ENCODE measurements at regions of chr3 and their contacts with region 1.

Region 1: DNA sequence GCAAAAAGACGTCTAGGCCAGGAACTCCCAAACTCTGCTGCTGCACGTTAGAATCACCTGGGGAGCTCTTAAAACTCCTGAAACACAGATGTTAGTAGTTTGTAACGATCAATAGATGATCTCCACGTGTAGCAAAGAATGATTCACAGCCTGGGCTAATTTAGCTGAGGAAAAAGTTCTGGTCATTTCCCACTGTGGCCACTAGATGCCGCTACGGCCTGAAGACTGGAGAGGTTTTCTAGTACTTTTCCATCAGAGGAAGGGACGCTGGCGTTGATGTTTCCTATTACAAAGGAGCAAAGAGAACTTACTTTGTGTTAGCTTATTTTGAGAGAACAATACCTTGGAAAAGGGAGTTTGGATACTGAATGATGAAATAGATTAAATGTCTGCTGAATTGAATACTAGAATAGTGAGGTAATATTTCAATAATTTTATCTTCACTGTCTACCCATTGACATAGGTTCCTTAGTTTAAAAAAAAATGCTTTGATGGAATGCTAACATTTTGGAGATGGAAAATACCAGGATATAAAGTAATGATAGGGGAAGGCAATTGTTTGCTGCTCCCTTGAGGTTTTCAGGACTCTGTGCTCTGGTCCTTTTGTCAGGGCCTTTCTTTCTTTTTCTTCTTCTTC is 159.1 kb downstream of the P3H2 start:
- DNase-seq: peak; percentile 70 to 74
- ATAC-seq: peak; percentile 59 to 82; a peak in 4 of 6 replicates
- H3K4me3 ChIP-seq: no peak overlapping the region
- H3K27ac ChIP-seq: peak overlapping the region; percentile 59 to 63
- H3K4me1 ChIP-seq: peaks cover 14% of the 10 kb centered on the region
- CTCF ChIP-seq: peak; percentile 78
- EP300 ChIP-seq: no peak
- POLR2A ChIP-seq: no peak
- RAD21 ChIP-seq: peak; percentile 87 to 90

Region 2: DNA sequence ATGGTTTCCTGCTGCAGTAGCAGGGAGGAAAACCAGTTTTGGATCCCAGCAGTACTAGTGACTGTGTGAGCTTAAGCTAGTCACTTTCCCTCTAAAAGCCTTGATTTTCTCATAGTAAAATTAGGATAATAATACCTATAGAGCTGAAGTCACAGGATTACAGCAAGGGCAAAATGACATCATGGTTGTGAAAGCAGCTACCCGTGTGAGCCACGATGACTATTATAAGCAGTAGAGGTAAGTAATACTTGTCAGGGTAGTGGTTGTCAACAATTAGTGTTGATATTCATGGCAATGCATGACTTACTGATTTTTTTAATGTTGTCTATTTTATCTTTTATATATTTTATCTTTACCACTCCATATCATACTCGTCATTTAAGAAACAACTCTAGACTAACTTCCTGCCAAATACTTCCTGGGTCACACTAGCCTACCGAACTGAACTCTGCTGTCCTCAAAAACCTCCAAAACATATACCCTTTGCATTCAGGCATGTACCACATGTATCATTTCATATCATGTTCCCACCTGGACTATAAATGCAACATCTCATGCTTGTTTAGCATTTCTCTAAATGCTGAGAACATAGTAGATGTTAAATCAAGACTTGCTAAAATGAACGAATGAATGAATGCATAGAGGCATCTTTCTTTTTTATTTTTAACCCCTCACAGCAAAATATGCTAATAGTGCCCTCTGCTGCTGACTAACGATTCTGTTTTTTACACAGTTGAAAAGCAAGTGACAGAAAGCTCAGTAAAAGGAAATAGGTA is 13.5 kb before region 1 on chr3:
- CTCF ChIA-PET with region 1: interaction called, 10 read pairs
- POLR2A ChIA-PET with region 1: no interaction called
- DNase-seq: peak in 1 of 2 experiments; percentile 60
- ATAC-seq: peak in 1 of 2 experiments; percentile 56; a peak in 2 of 6 replicates
- H3K4me3 ChIP-seq: no peak overlapping the region
- H3K27ac ChIP-seq: peak overlapping the region; percentile 68 to 72
- H3K4me1 ChIP-seq: peaks cover 12% of the 10 kb centered on the region
- CTCF ChIP-seq: peak; percentile 76
- EP300 ChIP-seq: no peak
- POLR2A ChIP-seq: no peak
- RAD21 ChIP-seq: peak; percentile 90 to 91

Region 3: DNA sequence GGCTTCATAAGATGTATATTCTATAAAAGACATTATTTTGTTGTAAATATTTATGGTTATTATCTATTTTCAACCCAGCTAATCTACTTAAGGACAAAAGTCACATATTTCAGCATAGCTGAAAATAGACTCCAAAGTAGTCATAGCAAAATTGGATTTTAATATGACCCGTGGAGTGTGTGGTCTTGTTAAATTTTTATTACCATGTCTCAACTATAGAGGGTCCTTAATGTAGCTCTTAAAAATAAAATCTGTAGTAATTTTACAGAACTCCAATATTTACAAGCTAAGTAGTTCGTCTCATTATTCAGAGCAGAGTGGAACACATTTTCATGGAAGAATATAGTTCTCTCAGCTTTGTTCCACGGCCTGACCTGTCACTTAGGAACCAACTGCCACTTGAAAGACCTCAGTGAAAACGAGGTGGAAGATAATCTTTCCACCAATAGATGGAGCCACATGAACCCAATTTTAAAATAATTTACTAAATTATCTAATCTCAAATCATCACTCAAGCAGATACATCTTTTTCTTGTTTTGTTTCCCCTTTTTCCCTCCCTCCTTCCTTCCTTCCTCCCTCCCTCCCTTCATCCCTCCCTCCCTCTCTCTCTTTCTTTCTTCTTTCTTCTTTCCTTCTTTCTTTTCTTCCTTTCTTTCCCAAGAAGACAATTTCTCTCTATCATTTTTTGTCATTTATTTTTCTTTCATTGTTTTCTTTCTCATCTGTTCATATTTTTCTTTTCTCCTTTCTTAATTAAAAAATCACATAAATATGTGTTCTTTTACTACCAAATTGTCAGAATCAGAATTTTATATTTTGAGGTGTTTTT is 263.4 kb after region 1 on chr3:
- CTCF ChIA-PET with region 1: interaction called, 14 read pairs
- POLR2A ChIA-PET with region 1: no interaction called
- DNase-seq: peak in 1 of 2 experiments; percentile 46
- ATAC-seq: peak in 1 of 2 experiments; percentile 67; a peak in 3 of 6 replicates
- H3K4me3 ChIP-seq: no peak overlapping the region
- H3K27ac ChIP-seq: no peak overlapping the region; a peak in 1 of 6 replicates
- H3K4me1 ChIP-seq: peaks cover 12% of the 10 kb centered on the region
- CTCF ChIP-seq: peak; percentile 68
- EP300 ChIP-seq: no peak
- POLR2A ChIP-seq: no peak
- RAD21 ChIP-seq: peak; percentile 68 to 77